ENCODE measurements at regions of chr4 and their contacts with region 1.

Region 1: DNA sequence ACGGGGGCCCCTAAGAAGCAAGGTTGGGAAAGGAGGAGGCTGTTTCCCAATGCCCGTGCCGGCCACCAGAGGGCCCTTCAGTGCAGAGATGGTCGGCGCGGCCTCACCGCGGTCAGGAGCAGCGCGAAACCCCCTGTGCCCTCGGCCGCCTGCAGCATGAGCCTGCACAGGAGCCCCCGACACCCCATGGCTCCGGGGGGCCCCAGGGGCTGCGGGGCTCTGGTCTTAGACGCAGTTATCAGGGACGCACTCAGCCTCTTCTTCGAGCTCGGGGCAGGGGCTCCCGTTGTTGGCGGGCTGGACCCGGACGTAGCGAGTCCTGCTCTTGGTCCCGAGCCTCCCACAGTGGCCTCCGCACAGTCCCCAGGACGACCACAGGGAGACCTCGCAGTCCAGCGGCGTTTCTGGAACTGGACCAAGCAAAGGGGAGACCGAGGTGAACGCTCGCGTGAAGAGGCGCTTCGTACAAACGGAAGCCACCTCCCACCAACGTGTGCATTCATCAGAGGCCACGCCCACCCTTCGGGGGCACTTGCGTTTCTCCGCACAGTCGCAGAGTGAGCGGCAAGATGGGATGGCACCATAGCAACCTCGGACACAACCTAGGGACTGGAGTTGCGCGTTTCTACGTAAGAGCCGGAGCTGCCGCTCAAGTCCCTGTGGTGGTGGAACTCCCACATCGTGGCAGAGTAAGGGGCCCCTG is 5.0 kb downstream of the SPON2 start:
- DNase-seq: peak; percentile 81 to 89
- ATAC-seq: peak; percentile 78 to 94 (median 88)
- H3K4me3 ChIP-seq: peak overlapping the region; percentile 75
- H3K27ac ChIP-seq: no peak overlapping the region
- H3K4me1 ChIP-seq: peaks cover 9% of the 10 kb centered on the region
- H3K27me3 ChIP-seq: peaks cover 0 to 7% (median 0%) of the 10 kb centered on the region in 3 donors
- CTCF ChIP-seq: peak; percentile 90

Region 2: GRCh38 chr4:876780-877179 is 290.6 kb before region 1 on chr4:
- intact Hi-C with region 1: no loop called
- DNase-seq: no peak
- ATAC-seq: no peak
- H3K4me3 ChIP-seq: no peak overlapping the region
- H3K27ac ChIP-seq: no peak overlapping the region
- H3K4me1 ChIP-seq: no peaks in the 10 kb centered on the region
- H3K27me3 ChIP-seq: no peaks in the 10 kb centered on the region
- CTCF ChIP-seq: peak; percentile 12

Region 3: DNA sequence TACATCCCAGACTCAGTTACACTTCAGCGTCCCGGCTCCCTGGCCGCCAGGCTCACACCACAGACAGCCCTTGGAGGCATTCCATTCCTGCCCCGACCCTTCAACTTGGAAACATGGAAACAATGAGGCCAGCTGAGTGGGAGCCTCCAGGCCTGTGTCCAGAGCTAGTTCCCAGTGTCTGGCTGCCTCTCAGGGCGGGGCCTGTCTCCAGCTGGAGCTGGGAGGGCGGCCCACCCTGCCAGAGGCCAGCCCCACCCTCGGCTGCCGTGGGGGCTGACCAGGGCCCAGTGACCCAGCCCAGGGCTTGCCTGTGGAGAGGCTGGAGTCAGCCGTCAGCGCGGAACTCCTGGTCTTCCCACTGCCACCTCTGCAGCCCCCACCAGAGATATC is 42.4 kb after region 1 on chr4:
- intact Hi-C with region 1: loop called (anchors 5 kb)
- DNase-seq: peak; percentile 82 to 89
- ATAC-seq: peak; percentile 33 to 67 (median 51)
- H3K4me3 ChIP-seq: peak overlapping the region; percentile 1
- H3K27ac ChIP-seq: peak overlapping the region; percentile 48
- H3K4me1 ChIP-seq: peaks cover 42% of the 10 kb centered on the region
- H3K27me3 ChIP-seq: no peaks in the 10 kb centered on the region
- CTCF ChIP-seq: no peak

Region 4: GRCh38 chr4:1249148-1249730 is 81.8 kb after region 1 on chr4:
- intact Hi-C with region 1: loop called (anchors 5 kb)
- DNase-seq: peak; percentile 90 to 93
- ATAC-seq: peak; percentile 69 to 74 (median 70)
- H3K4me3 ChIP-seq: peak overlapping the region; percentile 87
- H3K27ac ChIP-seq: peak overlapping the region; percentile 93
- H3K4me1 ChIP-seq: peaks cover 61% of the 10 kb centered on the region
- H3K27me3 ChIP-seq: no peaks in the 10 kb centered on the region
- CTCF ChIP-seq: no peak

Region 5: GRCh38 chr4:1269209-1269608 is 101.8 kb after region 1 on chr4:
- intact Hi-C with region 1: loop called (anchors 2 kb)
- DNase-seq: no peak
- ATAC-seq: no peak
- H3K4me3 ChIP-seq: no peak overlapping the region
- H3K27ac ChIP-seq: no peak overlapping the region
- H3K4me1 ChIP-seq: no peaks in the 10 kb centered on the region
- H3K27me3 ChIP-seq: no peaks in the 10 kb centered on the region
- CTCF ChIP-seq: no peak